ENCODE measurements at regions of chrX and their contacts with region 1.

Region 1: GRCh38 chrX:14963447-14964236 is 90.4 kb downstream of the MOSPD2 start:
- DNase-seq: peak; percentile 92
- ATAC-seq: peak; percentile 82
- H3K4me3 ChIP-seq: peak overlapping the region; percentile 22; the same call in 1 of the 2 replicates
- H3K27ac ChIP-seq: peak overlapping the region; percentile 99
- H3K4me1 ChIP-seq: peaks cover 27% of the 10 kb centered on the region
- H3K27me3 ChIP-seq: no peaks in the 10 kb centered on the region
- CTCF ChIP-seq: no peak

Region 2: DNA sequence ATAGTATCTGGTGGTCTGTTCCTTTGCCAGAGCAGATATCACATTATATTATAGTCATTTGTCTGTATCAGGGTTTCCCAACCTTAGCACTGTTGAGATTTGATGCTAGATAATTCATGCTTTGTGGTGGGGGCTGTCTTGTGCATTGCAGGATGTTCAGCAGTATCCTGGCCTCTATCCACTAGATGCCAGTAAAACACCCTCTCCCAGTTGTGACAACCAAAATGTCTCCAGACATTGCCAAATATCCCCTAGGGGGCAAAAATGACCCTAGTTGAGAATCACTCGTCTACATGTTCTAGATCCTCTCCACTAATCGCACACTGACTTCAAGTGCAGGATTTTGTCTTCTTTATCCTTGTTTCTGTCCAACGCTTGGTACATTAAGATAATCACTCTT is 251.5 kb before region 1 on chrX:
- CTCF ChIA-PET with region 1: no interaction called
- POLR2A ChIA-PET with region 1: no interaction called
- intact Hi-C with region 1: loop called (anchors 10 kb)
- DNase-seq: peak; percentile 37
- ATAC-seq: no peak; the same call in 1 of the 2 replicates
- H3K4me3 ChIP-seq: no peak overlapping the region
- H3K27ac ChIP-seq: no peak overlapping the region
- H3K4me1 ChIP-seq: peaks cover 3% of the 10 kb centered on the region
- H3K27me3 ChIP-seq: no peaks in the 10 kb centered on the region
- CTCF ChIP-seq: peak; percentile 44

Region 3: DNA sequence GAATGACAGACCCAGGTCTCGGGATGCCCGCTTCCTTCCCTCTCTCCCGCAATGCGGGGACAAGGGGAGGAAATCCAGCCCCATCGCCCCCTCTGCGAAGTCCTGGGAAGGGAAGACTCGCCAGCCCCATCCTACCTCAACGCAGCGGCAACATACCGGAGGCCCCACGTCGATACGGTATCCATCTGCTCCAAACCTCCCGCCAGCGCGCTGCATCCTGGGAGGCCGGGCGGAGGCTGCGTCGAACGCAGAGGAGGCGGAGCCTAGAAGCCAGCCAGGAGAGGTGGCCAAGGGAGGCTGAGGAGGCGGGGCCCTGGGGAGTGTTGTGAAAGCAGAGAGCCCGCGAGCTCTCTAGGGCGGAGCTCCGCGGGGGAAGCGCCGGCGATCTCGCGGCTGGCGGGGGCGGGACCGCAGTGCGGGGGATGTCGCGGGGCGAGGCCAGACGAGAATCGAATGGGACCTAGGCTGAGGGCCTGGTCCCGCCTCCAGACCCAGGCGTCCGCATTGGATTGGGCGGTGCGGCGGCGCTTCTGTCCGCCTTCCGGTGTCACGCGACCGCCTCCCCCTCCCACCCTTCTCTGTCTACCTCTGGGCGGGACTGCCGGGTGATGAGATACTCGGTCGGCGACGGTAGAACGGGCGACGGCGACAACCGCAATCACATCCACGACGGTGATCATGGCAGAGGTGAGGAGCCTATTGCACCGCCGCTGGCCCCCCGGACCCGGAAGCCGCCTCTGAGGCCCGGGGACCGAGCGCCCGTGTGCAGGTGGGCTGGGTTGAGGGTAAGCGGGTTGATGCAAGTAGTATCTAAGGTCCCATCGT is 90.6 kb before region 1 on chrX and contains the starts of genes FANCB and MOSPD2:
- CTCF ChIA-PET with region 1: no interaction called
- POLR2A ChIA-PET with region 1: no interaction called
- intact Hi-C with region 1: loop called (anchors 2 kb)
- DNase-seq: peak; percentile 95
- ATAC-seq: peak; percentile 97
- H3K4me3 ChIP-seq: peak within 1 kb of the TSS; percentile 93
- H3K27ac ChIP-seq: no peak within 1 kb of the TSS
- H3K4me1 ChIP-seq: peaks cover 15% of the 10 kb centered on the region; the same call in 1 of the 2 replicates
- H3K27me3 ChIP-seq: no peaks in the 10 kb centered on the region
- CTCF ChIP-seq: no peak
- total RNA-seq, gene FANCB: 7.9 and 11.6 TPM in 2 replicates
- total RNA-seq, gene MOSPD2: 6.7 and 11.6 TPM in 2 replicates

Region 4: DNA sequence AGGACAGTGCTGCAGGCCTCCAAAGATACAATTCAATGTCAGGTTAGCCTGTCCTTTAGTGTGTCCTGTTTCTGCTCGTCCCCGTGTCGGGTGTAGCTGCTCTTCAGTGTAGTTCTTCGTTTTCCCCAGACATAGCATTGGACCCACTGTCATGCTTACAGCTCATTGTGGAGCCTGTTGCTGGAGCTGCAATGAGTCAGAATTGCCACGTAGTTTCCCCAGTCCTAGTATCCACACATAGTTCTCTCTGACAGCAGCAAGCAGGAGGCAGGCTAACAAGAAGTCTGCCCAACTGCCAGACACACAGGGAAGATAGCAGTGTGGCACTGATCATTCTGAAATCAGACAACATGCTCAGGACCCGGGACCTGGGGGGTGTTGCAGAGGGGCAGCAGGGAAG is 41.2 kb before region 1 on chrX:
- CTCF ChIA-PET with region 1: no interaction called
- POLR2A ChIA-PET with region 1: no interaction called
- intact Hi-C with region 1: loop called (anchors 5 kb)
- DNase-seq: peak; percentile 64
- ATAC-seq: peak; percentile 92
- H3K4me3 ChIP-seq: no peak overlapping the region
- H3K27ac ChIP-seq: no peak overlapping the region
- H3K4me1 ChIP-seq: peaks cover 6% of the 10 kb centered on the region; the same call in 1 of the 2 replicates
- H3K27me3 ChIP-seq: no peaks in the 10 kb centered on the region
- CTCF ChIP-seq: no peak

Region 5: GRCh38 chrX:15059474-15059873 is 95.8 kb after region 1 on chrX:
- CTCF ChIA-PET with region 1: no interaction called
- POLR2A ChIA-PET with region 1: no interaction called
- intact Hi-C with region 1: loop called (anchors 2 kb)
- DNase-seq: peak; percentile 7
- ATAC-seq: peak; percentile 58
- H3K4me3 ChIP-seq: no peak overlapping the region
- H3K27ac ChIP-seq: no peak overlapping the region
- H3K4me1 ChIP-seq: peaks cover 9% of the 10 kb centered on the region
- H3K27me3 ChIP-seq: no peaks in the 10 kb centered on the region
- CTCF ChIP-seq: peak; percentile 31; the same call in 1 of the 2 replicates

Region 6: DNA sequence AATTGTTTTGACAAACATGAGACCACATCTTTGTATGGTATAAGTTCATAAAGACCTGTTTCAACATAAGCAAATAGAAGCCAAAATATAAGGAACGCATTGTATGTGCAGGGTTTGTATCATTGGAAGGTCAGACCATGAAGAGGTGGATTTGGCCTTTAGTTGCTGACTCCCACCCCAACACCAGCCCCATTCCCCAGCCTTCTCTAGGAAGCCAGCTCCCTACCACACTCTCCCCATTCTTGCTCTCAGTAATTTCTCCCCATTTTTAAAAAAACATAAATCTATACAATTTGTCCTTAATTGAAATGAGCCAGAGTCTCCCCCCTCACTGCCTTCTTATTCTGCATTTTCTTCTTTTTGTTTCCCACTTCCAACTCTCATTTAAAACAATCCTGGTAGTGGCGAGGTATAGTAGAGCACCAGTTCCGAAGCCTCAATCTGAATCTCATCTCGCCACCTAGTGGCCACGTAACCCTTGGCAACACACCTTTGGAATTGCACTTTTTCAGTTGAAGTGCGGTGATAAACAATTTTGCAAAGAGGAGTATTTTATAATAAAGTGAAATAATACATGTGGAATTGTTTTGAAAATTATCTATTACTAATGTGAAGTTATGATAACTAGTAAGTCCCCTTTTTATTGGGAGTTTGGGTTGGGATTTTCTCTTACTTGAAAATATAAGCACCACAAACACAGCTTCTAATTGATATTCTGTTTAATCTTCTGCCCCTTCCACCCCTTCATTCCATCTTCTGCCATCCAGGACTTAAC is 179.6 kb after region 1 on chrX:
- CTCF ChIA-PET with region 1: interaction called, 6 read pairs
- POLR2A ChIA-PET with region 1: no interaction called
- intact Hi-C with region 1: loop called (anchors 1 kb)
- DNase-seq: peak; percentile 75
- ATAC-seq: peak; percentile 88
- H3K4me3 ChIP-seq: no peak overlapping the region
- H3K27ac ChIP-seq: no peak overlapping the region
- H3K4me1 ChIP-seq: no peaks in the 10 kb centered on the region
- H3K27me3 ChIP-seq: no peaks in the 10 kb centered on the region
- CTCF ChIP-seq: peak; percentile 90

Region 7: DNA sequence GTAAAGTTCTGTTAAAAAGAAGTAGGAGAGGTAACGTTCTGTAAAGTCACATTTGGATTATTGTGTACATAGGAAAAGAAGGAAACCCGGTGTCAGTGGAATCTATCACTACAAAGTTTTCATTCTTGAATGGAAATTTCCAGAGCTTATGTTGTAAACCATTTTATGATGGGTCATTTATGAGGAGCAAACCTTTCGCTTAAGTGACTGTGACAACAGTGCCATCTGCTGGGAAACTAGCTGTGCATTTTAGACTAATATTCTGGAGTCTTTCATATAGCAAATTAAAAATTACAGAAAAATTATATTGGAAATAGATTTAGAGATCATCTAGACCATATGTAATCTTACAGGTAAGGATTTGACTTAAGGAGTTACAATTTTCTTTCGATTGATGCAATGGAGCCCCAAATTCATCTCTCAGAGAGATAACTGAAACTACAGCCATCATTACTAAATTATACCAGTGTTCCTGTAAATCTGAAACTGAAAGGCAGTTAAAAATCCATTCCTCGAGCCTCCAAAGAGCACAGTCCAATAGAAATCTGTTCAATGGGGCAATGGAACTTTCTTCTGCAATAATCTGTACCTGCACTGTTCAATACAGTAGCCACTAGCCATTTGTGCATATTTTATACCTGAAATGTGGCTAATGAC is 279.4 kb after region 1 on chrX:
- CTCF ChIA-PET with region 1: interaction called, 8 read pairs
- POLR2A ChIA-PET with region 1: no interaction called
- intact Hi-C with region 1: loop called (anchors 1 kb)
- DNase-seq: peak; percentile 76
- ATAC-seq: peak; percentile 59
- H3K4me3 ChIP-seq: no peak overlapping the region
- H3K27ac ChIP-seq: no peak overlapping the region
- H3K4me1 ChIP-seq: no peaks in the 10 kb centered on the region
- H3K27me3 ChIP-seq: no peaks in the 10 kb centered on the region
- CTCF ChIP-seq: peak; percentile 72

Region 8: DNA sequence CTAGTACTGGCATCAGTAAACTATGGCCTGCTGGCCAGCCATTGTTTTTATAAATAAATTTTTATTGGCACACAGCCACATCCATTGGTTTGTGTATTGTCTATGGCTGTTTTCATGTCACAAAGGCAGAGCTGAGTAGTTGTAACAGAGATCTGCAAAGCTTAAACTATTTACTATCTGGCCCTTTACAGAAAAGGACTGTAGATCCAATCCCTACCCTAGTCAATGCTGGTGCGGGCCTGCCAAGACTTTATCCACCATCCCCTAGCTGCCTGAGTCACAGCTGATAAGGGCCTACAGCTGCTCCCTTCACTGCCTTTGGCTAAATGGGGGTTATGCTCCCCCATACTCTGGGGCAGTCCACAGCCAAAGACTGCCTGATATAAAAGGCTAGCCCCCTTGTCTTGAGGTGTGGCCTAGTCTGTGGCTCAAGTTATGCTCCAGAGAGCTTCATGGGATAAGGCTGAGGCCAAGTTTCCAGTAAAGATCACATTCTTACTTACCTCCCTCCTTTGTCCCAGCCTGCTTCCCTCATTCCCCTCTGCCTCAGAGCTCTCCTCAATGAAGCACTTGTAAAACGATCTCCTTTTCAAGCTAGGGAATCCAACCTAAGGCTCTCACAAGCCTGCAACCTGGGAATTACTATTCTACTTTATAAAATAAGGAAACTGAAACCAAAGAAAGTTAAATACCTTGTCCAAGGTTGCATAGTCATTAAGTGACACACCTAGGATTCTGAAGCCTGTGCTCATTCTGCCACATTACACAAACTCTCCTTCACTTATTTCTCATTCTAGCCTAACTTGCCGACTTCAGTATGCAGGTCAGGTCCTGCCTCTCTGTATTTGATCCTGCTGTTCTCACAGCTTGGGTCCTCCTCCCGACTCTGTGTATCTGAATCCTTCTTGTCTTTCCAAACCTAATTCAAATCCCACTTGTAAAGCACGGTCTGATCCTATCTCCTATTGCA is 616.4 kb after region 1 on chrX:
- CTCF ChIA-PET with region 1: no interaction called
- POLR2A ChIA-PET with region 1: no interaction called
- intact Hi-C with region 1: no loop called
- DNase-seq: no peak
- ATAC-seq: no peak
- H3K4me3 ChIP-seq: no peak overlapping the region
- H3K27ac ChIP-seq: no peak overlapping the region
- H3K4me1 ChIP-seq: peaks cover 22% of the 10 kb centered on the region
- H3K27me3 ChIP-seq: no peaks in the 10 kb centered on the region
- CTCF ChIP-seq: no peak

Region 9: DNA sequence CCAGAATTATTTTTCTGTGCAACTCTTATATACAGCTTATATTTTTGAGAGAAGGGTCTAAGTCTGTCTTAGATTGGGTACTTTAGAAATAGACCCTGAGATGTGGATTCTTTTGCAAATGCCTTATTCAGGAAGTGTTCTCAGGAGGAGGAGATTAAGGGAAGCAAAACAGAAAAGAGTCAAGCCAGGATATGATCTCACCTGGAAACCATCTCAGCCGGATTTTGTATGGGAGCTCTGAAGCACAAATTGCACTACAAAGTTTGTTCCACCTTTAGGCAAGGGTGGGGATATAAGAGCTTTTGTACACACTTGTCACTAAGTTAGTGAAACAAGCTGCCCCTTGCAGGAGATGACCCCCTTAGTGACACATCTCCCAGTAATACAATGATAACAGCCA is 1038.5 kb after region 1 on chrX:
- CTCF ChIA-PET with region 1: no interaction called
- POLR2A ChIA-PET with region 1: no interaction called
- intact Hi-C with region 1: no loop called
- DNase-seq: peak; percentile 48
- ATAC-seq: peak; percentile 58
- H3K4me3 ChIP-seq: no peak overlapping the region
- H3K27ac ChIP-seq: no peak overlapping the region
- H3K4me1 ChIP-seq: peaks cover 6% of the 10 kb centered on the region
- H3K27me3 ChIP-seq: no peaks in the 10 kb centered on the region
- CTCF ChIP-seq: no peak

Measured in PC-3 (cell line).